K562 (cell line): ENCODE measurements at regions of chr4 and their contacts with region 1.

Region 1: GRCh38 chr4:173301518-173302201 is 32.5 kb downstream of the HMGB2 start:
- DNase-seq: peak; percentile 18 to 57 (median 19)
- ATAC-seq: peak; percentile 63
- H3K4me3 ChIP-seq: no peak overlapping the region
- H3K27ac ChIP-seq: no peak overlapping the region
- H3K4me1 ChIP-seq: no peaks in the 10 kb centered on the region
- H3K27me3 ChIP-seq: no peaks in the 10 kb centered on the region
- CTCF ChIP-seq: peak; percentile 43 to 83 (median 58); a peak in 5 of 6 replicates
- EP300 ChIP-seq: no peak
- POLR2A ChIP-seq: no peak
- RAD21 ChIP-seq: peak; percentile 73 to 75

Region 2: GRCh38 chr4:172881645-172882044 is 420.0 kb before region 1 on chr4:
- CTCF ChIA-PET with region 1: no interaction called
- POLR2A ChIA-PET with region 1: no interaction called
- in situ Hi-C with region 1: no loop called
- intact Hi-C with region 1: loop called (anchors 10 kb)
- DNase-seq: no peak
- ATAC-seq: no peak
- H3K4me3 ChIP-seq: no peak overlapping the region
- H3K27ac ChIP-seq: no peak overlapping the region
- H3K4me1 ChIP-seq: no peaks in the 10 kb centered on the region
- H3K27me3 ChIP-seq: no peaks in the 10 kb centered on the region
- CTCF ChIP-seq: no peak
- EP300 ChIP-seq: no peak
- POLR2A ChIP-seq: no peak
- RAD21 ChIP-seq: no peak

Region 3: DNA sequence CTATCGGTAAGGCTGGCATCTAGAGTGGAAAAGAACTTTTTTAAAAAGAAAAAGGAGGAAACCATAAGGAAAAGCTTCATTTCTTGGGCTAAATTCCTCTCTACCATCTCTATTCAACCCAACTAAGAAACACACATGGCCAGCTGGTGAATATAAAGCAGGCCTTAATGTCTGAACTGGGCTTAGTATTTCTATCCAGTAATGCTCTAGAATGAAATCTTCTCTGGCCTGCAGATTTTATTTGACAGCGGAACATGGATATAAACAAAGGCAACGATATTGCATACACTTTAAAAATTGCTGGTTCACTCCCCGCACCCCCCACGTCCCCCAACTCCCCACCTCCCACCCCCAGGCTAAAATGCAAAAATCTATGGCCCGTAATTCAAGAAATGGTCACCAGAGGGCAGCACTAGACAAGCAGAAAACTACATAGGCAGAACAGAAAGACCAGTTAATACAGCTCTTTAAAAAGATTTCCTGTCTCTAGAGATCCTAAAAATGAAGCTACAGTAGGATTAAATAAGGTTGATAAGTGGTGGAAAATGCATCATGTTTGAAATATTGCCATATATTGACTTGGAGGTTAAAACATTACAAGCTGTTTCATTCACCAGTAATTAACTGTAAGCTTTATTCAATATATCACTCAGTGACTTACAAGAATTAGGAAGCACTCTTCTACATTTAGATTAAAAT is 288.3 kb before region 1 on chr4:
- CTCF ChIA-PET with region 1: interaction called, 12 read pairs
- POLR2A ChIA-PET with region 1: no interaction called
- in situ Hi-C with region 1: no loop called
- intact Hi-C with region 1: loop called (anchors 1 kb)
- DNase-seq: peak; percentile 57 to 62 (median 62)
- ATAC-seq: peak; percentile 82
- H3K4me3 ChIP-seq: no peak overlapping the region
- H3K27ac ChIP-seq: no peak overlapping the region
- H3K4me1 ChIP-seq: peaks cover 0 to 4% of the 10 kb centered on the region in 2 experiments; a peak in 1 of 5 replicates
- H3K27me3 ChIP-seq: no peaks in the 10 kb centered on the region; a peak in 1 of 5 replicates
- CTCF ChIP-seq: peak; percentile 42 to 74 (median 64); a peak in 5 of 6 replicates
- EP300 ChIP-seq: no peak
- POLR2A ChIP-seq: no peak
- RAD21 ChIP-seq: peak; percentile 66 to 77

Region 4: DNA sequence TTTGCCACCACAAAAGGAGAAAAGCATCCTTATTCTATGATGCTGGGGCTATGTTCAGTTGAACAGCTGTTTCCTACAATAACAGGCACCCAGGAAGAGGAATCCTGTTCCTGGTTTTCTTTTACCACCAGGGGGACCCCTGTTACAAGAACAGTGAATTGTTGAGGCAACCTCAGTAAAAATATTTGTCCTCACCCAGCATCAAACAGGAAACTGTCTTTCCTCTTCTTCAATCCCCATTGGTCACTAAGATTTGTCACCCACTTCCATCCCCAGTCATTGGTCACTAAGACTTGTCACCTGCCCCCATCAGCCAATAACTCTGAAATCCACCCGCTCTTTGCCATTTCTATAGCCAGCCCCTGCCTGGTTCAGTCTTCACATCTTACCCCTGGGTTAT is 276.5 kb before region 1 on chr4:
- CTCF ChIA-PET with region 1: interaction called, 22 read pairs
- POLR2A ChIA-PET with region 1: interaction called, 3 read pairs
- in situ Hi-C with region 1: no loop called
- intact Hi-C with region 1: loop called (anchors 2 kb)
- DNase-seq: peak; percentile 52 to 77 (median 58)
- ATAC-seq: peak; percentile 95
- H3K4me3 ChIP-seq: no peak overlapping the region
- H3K27ac ChIP-seq: no peak overlapping the region
- H3K4me1 ChIP-seq: no peaks in the 10 kb centered on the region
- H3K27me3 ChIP-seq: no peaks in the 10 kb centered on the region
- CTCF ChIP-seq: peak; percentile 72 to 87 (median 73)
- EP300 ChIP-seq: no peak
- POLR2A ChIP-seq: no peak
- RAD21 ChIP-seq: peak; percentile 87 to 93